Posterior cingulate gyrus (tissue), 11 donors: ENCODE measurements at regions of chr15 and their contacts with region 1.

Region 1: DNA sequence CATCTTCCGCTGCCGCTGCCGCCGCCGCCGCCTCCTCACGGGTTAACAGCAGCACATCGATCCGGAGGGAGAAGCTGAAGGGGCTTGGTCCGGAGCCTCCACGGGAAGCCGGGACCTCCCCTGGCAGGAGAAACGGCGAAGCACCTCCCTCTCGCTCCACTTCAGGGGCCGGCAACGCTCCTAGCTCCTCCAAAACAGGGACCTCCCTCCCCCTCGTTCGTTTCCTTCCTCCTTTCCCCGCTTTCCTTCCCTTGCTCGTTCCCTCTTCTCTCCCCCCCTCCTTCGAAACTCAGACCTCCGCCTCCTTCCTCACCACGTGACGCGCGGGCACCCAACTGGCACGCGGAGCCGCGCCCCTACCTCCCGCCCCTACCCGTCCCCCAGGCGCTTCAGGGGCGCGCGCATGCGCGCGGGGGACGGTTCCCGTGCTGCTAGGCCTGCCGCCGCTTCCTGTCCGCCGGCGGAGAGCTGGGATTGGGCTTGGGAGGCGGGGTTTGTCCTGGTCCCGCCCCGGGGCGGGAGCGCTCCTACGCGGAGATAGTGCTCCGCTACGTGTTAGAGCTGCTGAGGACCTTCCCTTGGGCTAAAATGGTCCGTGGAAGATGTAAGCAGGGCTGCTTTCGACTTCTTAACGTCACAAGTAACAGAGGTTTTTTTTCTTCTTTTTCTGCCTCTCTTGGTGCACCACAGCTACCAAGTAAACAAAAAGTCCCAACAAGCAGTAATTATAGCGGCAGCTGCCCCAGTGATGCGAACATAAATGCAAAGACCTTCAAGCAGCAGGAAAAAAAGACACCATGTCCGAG is at the start of gene ADAM10:
- DNase-seq: peak; percentile 98 to 100 (median 99)

Region 2: DNA sequence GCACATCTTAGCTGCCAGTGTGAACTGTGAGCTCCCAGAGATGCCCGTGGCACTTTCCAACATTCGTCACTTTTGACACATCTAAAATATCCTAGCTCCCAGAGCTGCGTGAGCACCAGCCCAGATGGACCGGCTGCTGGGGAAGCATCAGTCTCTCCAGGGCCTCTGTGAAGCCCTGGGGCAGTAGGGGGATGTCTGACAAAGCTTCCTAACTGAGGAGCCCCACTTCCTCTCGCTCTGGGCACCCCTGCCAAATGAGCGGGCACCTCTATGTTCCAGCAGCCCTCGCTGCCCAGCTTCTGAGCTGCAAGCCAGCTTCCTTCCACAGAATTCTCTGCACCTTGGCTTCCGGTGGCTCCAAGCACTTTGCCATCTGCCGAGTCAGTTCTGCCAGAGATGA is 226.9 kb before region 1 on chr15:
- intact Hi-C with region 1: loop called (anchors 1 kb)
- DNase-seq: peak in 8 of 10 donors; percentile 22 to 89 (median 46)

Region 3: GRCh38 chr15:58677426-58677825 is 72.3 kb before region 1 on chr15:
- intact Hi-C with region 1: loop called (anchors 5 kb)
- DNase-seq: no peak

Region 4: DNA sequence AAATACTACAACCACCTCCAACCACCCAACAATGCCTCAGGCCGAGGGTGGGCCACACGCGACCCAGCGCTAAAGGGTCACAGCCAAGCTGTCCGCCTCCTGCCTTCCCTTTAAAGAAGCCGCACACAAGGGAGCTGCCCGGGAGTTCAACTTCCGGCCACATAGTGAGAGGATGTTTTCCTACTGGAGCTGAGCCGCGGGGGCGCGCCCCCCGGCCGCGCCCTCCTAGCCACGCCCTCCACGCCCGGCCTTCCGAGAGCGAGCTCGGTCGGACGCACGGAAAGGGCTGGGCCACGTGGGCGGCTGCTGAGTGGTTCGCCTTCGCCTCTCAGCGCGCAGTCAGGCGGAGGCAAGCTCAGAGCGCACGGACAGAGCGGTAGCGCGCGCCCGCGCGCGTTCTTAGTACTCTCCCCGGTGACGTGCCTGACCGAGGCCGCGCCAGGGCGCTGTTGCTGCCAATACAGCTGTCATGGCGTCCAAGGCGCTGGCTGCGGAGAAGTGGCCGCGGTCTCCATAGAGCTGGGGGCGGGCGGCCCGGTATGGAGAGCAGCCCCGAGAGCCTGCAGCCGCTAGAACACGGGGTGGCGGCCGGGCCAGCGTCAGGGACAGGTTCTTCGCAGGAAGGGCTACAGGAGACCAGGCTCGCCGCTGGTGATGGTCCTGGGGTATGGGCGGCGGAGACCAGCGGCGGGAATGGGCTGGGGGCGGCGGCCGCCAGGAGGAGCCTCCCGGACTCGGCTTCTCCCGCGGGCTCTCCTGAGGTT is 21.3 kb after region 1 on chr15 and contains the start of gene MINDY2:
- intact Hi-C with region 1: loop called (anchors 1 kb)
- DNase-seq: peak; percentile 95 to 100 (median 98)

Region 5: DNA sequence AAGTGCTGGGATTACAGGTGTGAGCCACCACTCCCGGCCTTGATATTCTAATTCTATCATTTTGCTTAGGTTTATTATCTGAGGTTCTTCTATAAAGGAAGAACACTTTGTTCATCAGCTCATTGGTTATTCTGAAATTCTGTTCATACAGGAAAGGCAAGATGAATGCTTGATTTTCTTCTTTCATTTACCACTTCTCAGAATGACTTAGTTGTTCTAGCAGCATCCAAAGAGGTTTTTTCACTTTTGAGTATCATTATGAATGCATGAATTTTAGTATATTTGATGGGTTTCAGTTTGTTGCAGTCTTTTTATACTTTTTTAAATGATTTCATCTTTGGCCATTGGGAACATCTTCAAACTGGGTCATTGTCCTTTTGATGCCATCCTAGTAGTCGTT is 289.5 kb after region 1 on chr15:
- intact Hi-C with region 1: no loop called
- DNase-seq: no peak